ENCODE measurements at regions of chr11 and their contacts with region 1.

Region 1: GRCh38 chr11:69683764-69684333 is 8.7 kb upstream of the LTO1 start:
- DNase-seq: peak; percentile 77 to 79
- H3K4me3 ChIP-seq: no peak overlapping the region
- H3K4me3 Mint-ChIP-seq: no peak overlapping the region
- H3K27ac Mint-ChIP-seq: no peak overlapping the region
- H3K4me1 ChIP-seq: peaks cover 10% of the 10 kb centered on the region
- H3K4me1 Mint-ChIP-seq: peaks cover 10% of the 10 kb centered on the region
- H3K27me3 ChIP-seq: no peaks in the 10 kb centered on the region
- H3K27me3 Mint-ChIP-seq: no peaks in the 10 kb centered on the region
- CTCF ChIP-seq: peak; percentile 60 to 76

Region 2: GRCh38 chr11:69567951-69568808 is 115.7 kb before region 1 on chr11:
- CTCF ChIA-PET with region 1: no interaction called
- POLR2A ChIA-PET with region 1: no interaction called
- intact Hi-C with region 1: no loop called
- DNase-seq: no peak
- H3K4me3 ChIP-seq: no peak overlapping the region
- H3K4me3 Mint-ChIP-seq: no peak overlapping the region
- H3K27ac Mint-ChIP-seq: no peak overlapping the region
- H3K4me1 ChIP-seq: no peaks in the 10 kb centered on the region
- H3K4me1 Mint-ChIP-seq: no peaks in the 10 kb centered on the region
- H3K27me3 ChIP-seq: no peaks in the 10 kb centered on the region
- H3K27me3 Mint-ChIP-seq: no peaks in the 10 kb centered on the region
- CTCF ChIP-seq: no peak

Region 3: DNA sequence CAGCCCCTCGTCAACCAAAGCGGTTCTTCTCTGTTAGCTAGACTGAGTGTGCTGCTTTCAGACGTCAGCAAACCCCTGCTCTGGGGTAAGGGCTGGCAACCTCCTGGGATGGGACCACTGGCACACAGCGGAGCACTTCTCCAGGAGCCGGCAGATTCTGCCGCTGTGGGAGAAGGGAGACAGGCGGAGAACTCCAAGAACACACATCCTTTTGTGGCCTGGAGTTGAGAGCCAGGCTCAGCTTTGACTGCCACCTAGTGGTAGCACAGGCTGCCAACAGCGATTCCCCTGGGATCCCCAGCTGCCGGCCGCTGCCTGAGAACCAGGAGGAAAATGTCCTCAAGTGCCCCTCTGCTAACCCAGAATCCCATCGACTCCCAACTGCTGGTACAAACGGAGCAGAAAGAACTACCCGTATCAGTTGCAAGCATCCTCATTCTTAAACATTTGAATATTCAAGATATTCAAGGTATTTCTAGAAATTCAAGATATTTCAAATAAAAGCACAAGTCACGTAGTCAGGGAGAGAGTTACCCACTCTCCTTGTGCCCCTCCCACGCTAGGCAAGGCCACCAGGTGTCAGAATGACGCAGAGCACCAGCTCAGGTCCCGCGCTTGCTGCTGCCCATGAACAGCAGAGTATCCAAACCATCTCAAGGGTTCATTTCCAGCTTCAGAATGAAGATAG is 13.5 kb before region 1 on chr11:
- CTCF ChIA-PET with region 1: interaction called, 11 read pairs
- POLR2A ChIA-PET with region 1: no interaction called
- intact Hi-C with region 1: loop called (anchors 1 kb)
- DNase-seq: peak; percentile 89 to 93
- H3K4me3 ChIP-seq: no peak overlapping the region
- H3K4me3 Mint-ChIP-seq: no peak overlapping the region
- H3K27ac Mint-ChIP-seq: peak overlapping the region; percentile 34
- H3K4me1 ChIP-seq: peaks cover 15% of the 10 kb centered on the region
- H3K4me1 Mint-ChIP-seq: peaks cover 17% of the 10 kb centered on the region
- H3K27me3 ChIP-seq: no peaks in the 10 kb centered on the region
- H3K27me3 Mint-ChIP-seq: peaks cover under 1% of the 10 kb centered on the region
- CTCF ChIP-seq: peak; percentile 99

Region 4: DNA sequence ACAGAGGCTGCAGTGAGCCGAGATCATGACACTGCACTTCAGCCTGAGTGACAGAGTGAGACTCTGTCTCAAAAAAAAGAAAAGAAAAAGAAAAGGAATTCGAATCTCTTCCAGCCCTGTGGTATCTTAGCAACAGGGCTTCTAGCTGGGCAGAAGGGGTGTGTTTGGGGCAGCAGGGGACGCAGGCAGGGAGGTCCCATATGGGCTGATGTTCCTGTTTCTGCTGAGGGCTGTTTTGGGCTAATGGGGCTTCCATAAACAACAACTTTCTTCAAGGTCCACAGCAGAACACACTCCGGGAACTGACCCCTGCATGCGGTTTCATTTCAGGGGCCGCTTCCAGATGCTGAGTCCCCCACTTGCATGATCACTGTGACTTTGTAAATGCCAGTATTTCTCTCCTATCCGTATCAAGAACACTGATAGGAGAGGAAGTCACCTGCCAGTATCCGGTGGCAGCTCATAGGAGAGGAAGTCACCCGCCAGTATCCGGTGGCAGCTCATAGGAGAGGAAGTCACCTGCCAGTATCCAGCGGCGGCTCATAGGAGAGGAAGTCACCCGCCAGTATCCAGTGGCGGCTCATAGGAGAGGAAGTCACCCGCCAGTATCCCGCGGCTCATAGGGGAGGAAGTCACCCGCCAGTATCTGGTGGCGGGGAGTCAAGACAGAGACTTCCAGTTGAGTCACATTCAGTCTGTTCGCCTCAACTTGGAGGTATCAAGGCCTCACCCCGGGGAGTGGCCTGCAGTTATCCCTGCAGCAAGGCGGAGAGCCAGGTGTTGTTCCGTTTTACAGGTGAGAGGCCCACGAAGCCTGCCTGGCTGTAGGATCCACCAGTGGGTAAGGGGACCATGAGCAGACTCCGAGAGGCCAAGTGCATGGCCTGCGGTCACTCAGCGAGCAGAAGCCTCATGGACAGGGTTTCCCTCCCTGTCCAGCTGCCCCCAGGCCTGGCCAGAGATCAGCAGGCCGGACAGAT is 28.3 kb after region 1 on chr11:
- CTCF ChIA-PET with region 1: interaction called, 6 read pairs
- POLR2A ChIA-PET with region 1: no interaction called
- intact Hi-C with region 1: loop called (anchors 1 kb)
- DNase-seq: no peak
- H3K4me3 ChIP-seq: no peak overlapping the region
- H3K4me3 Mint-ChIP-seq: no peak overlapping the region
- H3K27ac Mint-ChIP-seq: no peak overlapping the region
- H3K4me1 ChIP-seq: peaks cover 13% of the 10 kb centered on the region
- H3K4me1 Mint-ChIP-seq: peaks cover 7% of the 10 kb centered on the region
- H3K27me3 ChIP-seq: no peaks in the 10 kb centered on the region
- H3K27me3 Mint-ChIP-seq: no peaks in the 10 kb centered on the region
- CTCF ChIP-seq: no peak

Region 5: DNA sequence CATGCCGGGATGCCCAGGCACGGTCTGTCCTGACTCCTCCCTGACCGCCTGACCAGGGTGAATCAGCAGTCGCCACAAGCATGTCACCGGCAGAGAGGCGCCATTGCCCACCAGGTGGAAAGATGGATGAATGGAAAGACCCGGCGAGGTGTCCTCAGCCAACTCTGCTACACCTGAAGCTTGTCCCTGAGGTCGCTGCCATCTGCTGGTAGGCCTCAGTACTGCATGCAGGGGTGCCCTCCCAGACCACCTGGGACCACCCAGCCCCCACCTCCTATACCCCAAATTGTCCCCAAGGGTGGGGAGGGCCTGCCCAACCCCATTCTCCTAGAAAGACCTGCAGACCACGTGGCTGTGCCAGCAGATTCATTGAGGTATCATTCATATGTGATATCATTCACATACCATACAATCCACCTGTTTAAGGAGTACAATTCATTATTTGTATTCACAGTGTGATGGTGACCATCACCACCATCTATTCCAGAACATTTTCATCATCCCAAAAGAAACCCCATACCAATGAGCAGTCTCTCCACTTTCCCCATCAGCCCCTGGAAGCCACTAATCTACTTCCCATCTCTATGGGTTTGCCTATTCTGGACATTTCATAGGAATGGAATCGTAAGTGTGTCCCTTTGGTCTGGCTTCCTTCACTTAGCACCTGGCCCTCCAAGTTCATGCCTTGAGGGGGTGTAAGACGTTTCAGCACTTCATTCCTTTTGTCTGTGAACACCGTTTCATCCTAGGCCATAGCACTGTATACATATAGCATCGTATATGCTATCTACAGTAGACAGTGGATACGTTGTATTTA is 117.9 kb after region 1 on chr11:
- CTCF ChIA-PET with region 1: no interaction called
- POLR2A ChIA-PET with region 1: no interaction called
- intact Hi-C with region 1: loop called (anchors 1 kb)
- DNase-seq: peak; percentile 69 to 78
- H3K4me3 ChIP-seq: no peak overlapping the region
- H3K4me3 Mint-ChIP-seq: no peak overlapping the region
- H3K27ac Mint-ChIP-seq: no peak overlapping the region
- H3K4me1 ChIP-seq: no peaks in the 10 kb centered on the region
- H3K4me1 Mint-ChIP-seq: no peaks in the 10 kb centered on the region
- H3K27me3 ChIP-seq: no peaks in the 10 kb centered on the region
- H3K27me3 Mint-ChIP-seq: no peaks in the 10 kb centered on the region
- CTCF ChIP-seq: peak; percentile 90 to 97

Region 6: GRCh38 chr11:69888483-69889076 is 204.7 kb after region 1 on chr11:
- CTCF ChIA-PET with region 1: interaction called, 4 read pairs
- POLR2A ChIA-PET with region 1: no interaction called
- intact Hi-C with region 1: loop called (anchors 1 kb)
- DNase-seq: peak; percentile 89 to 92
- H3K4me3 ChIP-seq: no peak overlapping the region
- H3K4me3 Mint-ChIP-seq: no peak overlapping the region
- H3K27ac Mint-ChIP-seq: no peak overlapping the region
- H3K4me1 ChIP-seq: peaks cover 12% of the 10 kb centered on the region; the same call in 1 of the 2 replicates
- H3K4me1 Mint-ChIP-seq: no peaks in the 10 kb centered on the region
- H3K27me3 ChIP-seq: no peaks in the 10 kb centered on the region
- H3K27me3 Mint-ChIP-seq: peaks cover 12% of the 10 kb centered on the region
- CTCF ChIP-seq: peak; percentile 98 to 99

Measured in Caco-2 (cell line).